IMR-90 (cell line): ENCODE measurements at regions of chr10 and their contacts with region 1.

Region 1: GRCh38 chr10:28241741-28242399 is 61.0 kb downstream of the MPP7 start:
- DNase-seq: peak; percentile 70
- ATAC-seq: peak; percentile 97
- H3K4me3 ChIP-seq: no peak overlapping the region
- H3K27ac ChIP-seq: no peak overlapping the region
- H3K4me1 ChIP-seq: no peaks in the 10 kb centered on the region
- H3K27me3 ChIP-seq: peaks cover 2% of the 10 kb centered on the region; the same call in 1 of the 2 replicates
- CTCF ChIP-seq: peak; percentile 93
- POLR2A ChIP-seq: 0 out of 2 replicates have a peak, but pooled peaks have one; percentile 36
- RAD21 ChIP-seq: peak; percentile 94

Region 2: DNA sequence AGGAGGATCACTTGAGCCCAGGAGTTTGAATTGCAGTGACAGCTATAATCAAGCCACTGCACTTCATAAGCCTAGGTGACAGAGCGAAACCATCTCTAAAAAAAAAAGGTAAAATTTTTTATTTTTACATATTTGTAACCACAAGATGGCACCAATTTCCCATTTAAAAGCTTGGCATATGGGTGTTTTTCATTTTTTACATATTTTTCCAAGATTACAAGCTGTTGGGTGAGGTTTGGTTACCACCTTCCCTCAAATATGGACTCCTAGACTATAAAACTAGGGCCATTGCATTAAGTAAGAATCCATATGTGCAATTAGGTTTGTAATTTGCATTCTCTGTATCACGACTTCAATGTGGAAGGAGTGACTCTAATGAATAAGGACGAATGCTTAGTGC is 872.0 kb before region 1 on chr10:
- CTCF ChIA-PET with region 1: interaction called, 3 read pairs
- POLR2A ChIA-PET with region 1: no interaction called
- dilution Hi-C with region 1: no loop called
- in situ Hi-C with region 1: no loop called
- intact Hi-C with region 1: loop called (anchors 2 kb)
- DNase-seq: no peak
- ATAC-seq: peak; percentile 37; the same call in 1 of the 2 replicates
- H3K4me3 ChIP-seq: no peak overlapping the region
- H3K27ac ChIP-seq: no peak overlapping the region
- H3K4me1 ChIP-seq: no peaks in the 10 kb centered on the region
- H3K27me3 ChIP-seq: no peaks in the 10 kb centered on the region; the same call in 1 of the 2 replicates
- CTCF ChIP-seq: 0 out of 2 replicates have a peak, but pooled peaks have one; percentile 29
- POLR2A ChIP-seq: no peak
- RAD21 ChIP-seq: peak; percentile 24; the same call in 1 of the 2 replicates

Region 3: DNA sequence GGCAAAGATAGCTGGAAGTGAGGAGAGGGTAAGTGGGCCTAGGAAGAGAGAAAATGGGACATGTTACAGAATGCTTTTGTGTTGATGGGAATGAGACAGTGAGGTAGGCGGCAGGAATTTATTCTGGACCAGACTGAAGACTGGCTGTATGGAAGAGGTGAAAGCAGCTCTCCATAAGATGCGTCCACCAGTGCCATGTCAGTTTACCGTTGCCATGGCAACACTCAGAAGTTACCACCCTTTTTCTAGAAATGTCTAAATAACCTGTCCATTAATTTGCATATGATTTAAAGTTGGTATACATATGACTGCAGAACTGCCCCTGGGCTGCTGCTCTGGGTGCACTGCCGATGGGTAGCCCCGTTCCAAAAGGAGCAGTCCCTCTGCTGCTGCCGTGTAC is 691.0 kb before region 1 on chr10:
- CTCF ChIA-PET with region 1: no interaction called
- POLR2A ChIA-PET with region 1: no interaction called
- dilution Hi-C with region 1: no loop called
- in situ Hi-C with region 1: loop called (anchors 5 kb)
- intact Hi-C with region 1: no loop called
- DNase-seq: no peak
- ATAC-seq: no peak; the same call in 1 of the 2 replicates
- H3K4me3 ChIP-seq: no peak overlapping the region
- H3K27ac ChIP-seq: no peak overlapping the region
- H3K4me1 ChIP-seq: no peaks in the 10 kb centered on the region
- H3K27me3 ChIP-seq: no peaks in the 10 kb centered on the region
- CTCF ChIP-seq: no peak
- POLR2A ChIP-seq: no peak
- RAD21 ChIP-seq: no peak

Region 4: DNA sequence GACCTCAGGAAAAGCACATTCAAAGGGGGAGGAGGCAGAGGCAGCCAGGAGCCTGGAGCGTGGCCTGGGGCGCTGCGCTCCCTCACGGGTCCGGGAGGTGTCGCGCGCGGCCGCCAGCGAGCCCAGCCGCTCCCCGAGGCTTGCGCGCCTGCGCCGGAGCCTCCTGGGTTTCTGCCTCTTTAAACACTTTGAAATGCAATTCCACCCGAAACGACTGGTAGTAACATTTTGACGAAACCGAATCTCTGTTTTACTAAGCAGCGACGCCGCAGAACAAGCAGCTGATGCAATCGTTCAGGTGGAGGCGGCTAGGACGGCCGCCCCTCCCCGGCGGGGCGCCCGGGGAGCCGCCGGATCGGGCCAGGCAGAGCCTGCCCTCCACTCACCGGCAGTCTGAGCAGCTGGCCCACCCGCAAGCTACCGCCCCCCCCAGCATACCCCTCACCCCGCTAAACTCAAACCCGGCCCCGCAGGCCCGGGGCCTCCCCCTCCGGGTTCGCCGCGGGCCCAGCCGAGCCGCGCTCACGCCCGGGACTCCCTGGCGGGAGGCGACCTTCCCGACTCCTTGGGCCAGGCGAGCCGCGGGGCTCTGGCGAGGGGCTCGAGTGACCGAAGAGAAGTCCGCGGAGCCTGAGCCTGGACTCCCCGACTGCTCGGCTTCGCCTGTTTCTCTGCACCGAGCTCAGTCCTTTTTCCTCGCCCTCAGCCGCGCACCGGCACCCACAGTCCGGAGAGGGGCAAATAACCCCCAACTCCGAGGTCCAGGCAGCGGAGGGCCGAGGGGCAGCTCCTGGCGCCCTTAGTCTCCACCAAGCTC is 499.5 kb before region 1 on chr10:
- CTCF ChIA-PET with region 1: interaction called, 9 read pairs
- POLR2A ChIA-PET with region 1: no interaction called
- dilution Hi-C with region 1: no loop called
- in situ Hi-C with region 1: no loop called
- intact Hi-C with region 1: loop called (anchors 1 kb)
- DNase-seq: peak; percentile 85
- ATAC-seq: peak; percentile 85
- H3K4me3 ChIP-seq: peak overlapping the region; percentile 33
- H3K27ac ChIP-seq: peak overlapping the region; percentile 38
- H3K4me1 ChIP-seq: peaks cover 3% of the 10 kb centered on the region; the same call in 1 of the 2 replicates
- H3K27me3 ChIP-seq: peaks cover 46% of the 10 kb centered on the region
- CTCF ChIP-seq: peak; percentile 89
- POLR2A ChIP-seq: peak; percentile 61
- RAD21 ChIP-seq: peak; percentile 83

Region 5: GRCh38 chr10:27783660-27784059 is 458.2 kb before region 1 on chr10:
- CTCF ChIA-PET with region 1: interaction called, 3 read pairs
- POLR2A ChIA-PET with region 1: no interaction called
- dilution Hi-C with region 1: no loop called
- in situ Hi-C with region 1: no loop called
- intact Hi-C with region 1: loop called (anchors 2 kb)
- DNase-seq: peak; percentile 62
- ATAC-seq: peak; percentile 89
- H3K4me3 ChIP-seq: no peak overlapping the region
- H3K27ac ChIP-seq: no peak overlapping the region
- H3K4me1 ChIP-seq: no peaks in the 10 kb centered on the region
- H3K27me3 ChIP-seq: no peaks in the 10 kb centered on the region
- CTCF ChIP-seq: peak; percentile 60
- POLR2A ChIP-seq: no peak
- RAD21 ChIP-seq: peak; percentile 73

Region 6: GRCh38 chr10:28160866-28161405 is 80.9 kb before region 1 on chr10:
- CTCF ChIA-PET with region 1: no interaction called
- POLR2A ChIA-PET with region 1: no interaction called
- dilution Hi-C with region 1: no loop called
- in situ Hi-C with region 1: no loop called
- intact Hi-C with region 1: no loop called
- DNase-seq: no peak
- ATAC-seq: no peak
- H3K4me3 ChIP-seq: no peak overlapping the region
- H3K27ac ChIP-seq: no peak overlapping the region
- H3K4me1 ChIP-seq: no peaks in the 10 kb centered on the region
- H3K27me3 ChIP-seq: no peaks in the 10 kb centered on the region
- CTCF ChIP-seq: no peak
- POLR2A ChIP-seq: no peak
- RAD21 ChIP-seq: no peak

Region 7: DNA sequence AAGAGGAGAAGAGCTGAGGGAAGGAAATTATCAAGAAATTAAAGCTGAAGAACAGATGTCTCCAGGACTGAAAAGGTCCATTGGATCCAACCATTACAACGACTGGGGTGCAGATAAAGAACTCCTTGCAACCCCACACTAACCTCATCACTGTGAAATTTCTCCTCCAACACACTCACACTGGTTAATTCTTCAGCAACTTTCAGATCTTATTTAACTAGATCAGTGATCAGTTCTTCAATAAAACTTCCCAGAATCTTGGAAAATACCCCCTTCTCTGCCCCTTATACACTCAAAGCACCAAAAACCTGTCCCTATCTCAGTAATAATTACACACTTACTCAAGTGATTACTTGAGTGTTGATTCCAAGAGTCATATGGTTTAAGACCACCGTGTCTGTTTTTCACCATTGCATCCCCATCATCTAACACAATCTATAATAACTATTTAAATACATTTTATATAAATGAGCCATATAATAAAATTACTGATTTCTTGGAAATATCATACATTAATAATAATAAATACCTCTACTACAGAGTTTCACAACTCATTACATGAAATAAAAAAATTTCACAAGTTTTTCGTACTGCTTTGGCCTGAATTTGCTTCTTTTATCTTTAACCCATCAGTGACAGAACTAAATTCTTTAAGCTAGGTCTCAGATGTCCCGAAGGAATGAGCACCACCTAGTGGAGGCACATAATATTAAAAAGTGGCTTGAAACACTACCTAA is 62.7 kb before region 1 on chr10:
- CTCF ChIA-PET with region 1: no interaction called
- POLR2A ChIA-PET with region 1: no interaction called
- dilution Hi-C with region 1: no loop called
- in situ Hi-C with region 1: no loop called
- intact Hi-C with region 1: loop called (anchors 2 kb)
- DNase-seq: peak; percentile 62
- ATAC-seq: peak; percentile 79
- H3K4me3 ChIP-seq: no peak overlapping the region
- H3K27ac ChIP-seq: no peak overlapping the region
- H3K4me1 ChIP-seq: 0 out of 2 replicates have a peak, but pooled peaks cover 2% of the 10 kb centered on the region
- H3K27me3 ChIP-seq: no peaks in the 10 kb centered on the region
- CTCF ChIP-seq: peak; percentile 80
- POLR2A ChIP-seq: 0 out of 2 replicates have a peak, but pooled peaks have one; percentile 30
- RAD21 ChIP-seq: peak; percentile 89